Caco-2 (cell line): ENCODE measurements at regions of chr5 and their contacts with region 1.

Region 1: DNA sequence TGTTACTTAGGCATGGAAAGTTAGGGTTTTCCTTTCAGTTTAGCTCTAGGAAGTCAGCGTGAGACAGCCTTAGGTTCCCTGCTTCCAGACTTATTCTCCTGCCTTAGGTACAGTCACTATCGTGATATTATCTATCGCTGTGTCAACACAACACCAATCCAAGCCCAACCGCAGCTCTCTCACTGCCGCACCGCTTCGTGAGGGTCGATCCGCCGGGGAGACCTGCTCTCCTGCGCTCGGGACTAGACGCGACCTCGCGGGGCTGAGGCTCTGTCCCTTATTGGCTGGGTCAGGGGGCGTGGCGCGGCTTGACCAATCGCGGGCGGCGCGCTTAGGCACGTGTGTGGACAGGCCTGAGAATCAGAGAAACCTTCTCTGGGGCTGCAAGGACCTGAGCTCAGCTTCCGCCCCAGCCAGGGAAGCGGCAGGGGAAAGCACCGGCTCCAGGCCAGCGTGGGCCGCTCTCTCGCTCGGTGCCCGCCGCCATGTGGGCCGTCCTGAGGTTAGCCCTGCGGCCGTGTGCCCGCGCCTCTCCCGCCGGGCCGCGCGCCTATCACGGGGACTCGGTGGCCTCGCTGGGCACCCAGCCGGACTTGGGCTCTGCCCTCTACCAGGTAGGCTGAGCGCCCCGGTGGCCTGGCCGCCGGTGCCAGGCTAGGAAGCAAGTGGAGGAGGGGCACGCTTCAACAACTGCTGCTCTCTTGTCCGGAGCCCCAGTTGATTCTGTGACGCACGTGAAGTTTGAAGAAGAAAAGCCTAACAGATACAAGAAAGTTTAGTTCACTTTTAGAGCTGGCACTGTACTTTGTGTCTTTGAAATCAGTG is at the start of gene MCCC2:
- DNase-seq: peak; percentile 99
- H3K4me3 ChIP-seq: peak within 1 kb of the TSS; percentile 87
- H3K4me3 Mint-ChIP-seq: peak within 1 kb of the TSS; percentile 97
- H3K27ac Mint-ChIP-seq: peak within 1 kb of the TSS; percentile 99
- H3K4me1 ChIP-seq: peaks cover 8% of the 10 kb centered on the region
- H3K4me1 Mint-ChIP-seq: peaks cover 21% of the 10 kb centered on the region
- H3K27me3 ChIP-seq: no peaks in the 10 kb centered on the region
- H3K27me3 Mint-ChIP-seq: no peaks in the 10 kb centered on the region
- CTCF ChIP-seq: no peak
- total RNA-seq, gene MCCC2: 113 and 124 TPM in 2 replicates

Region 2: DNA sequence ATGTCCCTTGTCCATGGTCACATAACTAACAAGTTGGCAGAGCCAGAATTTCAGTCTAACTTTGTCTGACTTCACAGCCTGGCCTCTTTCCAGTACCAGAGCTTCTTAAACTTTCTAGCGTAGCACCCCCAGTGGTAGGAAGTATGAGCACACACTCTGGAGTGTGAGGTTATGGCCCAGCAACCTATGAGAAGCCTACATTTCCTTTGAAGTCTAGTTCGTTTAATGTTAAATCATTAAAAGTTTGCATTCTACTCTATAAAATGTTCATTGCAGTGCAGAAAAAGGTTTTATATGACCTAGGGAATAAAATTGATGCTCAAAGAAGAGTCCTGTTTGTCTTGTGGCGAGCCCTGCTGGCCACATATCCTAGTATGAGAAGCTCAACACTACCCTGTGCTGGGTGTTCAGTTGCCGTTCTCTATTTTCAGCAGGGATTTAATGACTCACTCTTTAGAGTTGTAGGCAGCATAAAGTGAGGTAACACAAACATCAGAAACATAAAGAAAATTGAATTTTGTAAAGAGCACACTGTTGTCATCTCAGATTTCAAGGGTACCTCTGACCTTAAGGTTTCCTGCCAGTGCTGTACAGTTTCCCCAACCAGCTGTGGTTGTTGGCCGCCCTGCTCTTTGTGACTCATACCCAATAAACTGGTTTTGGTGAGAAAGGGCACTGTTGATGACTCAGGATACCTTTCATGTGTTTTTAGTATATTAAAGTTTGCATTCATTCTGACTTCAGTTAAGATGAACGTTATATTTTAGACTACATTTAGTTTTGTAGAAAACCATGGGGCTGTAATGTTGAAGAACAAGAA is 14.3 kb after region 1 on chr5:
- CTCF ChIA-PET with region 1: interaction called, 15 read pairs
- POLR2A ChIA-PET with region 1: interaction called, 5 read pairs
- intact Hi-C with region 1: loop called (anchors 1 kb)
- DNase-seq: peak; percentile 54 to 62
- H3K4me3 ChIP-seq: no peak overlapping the region
- H3K4me3 Mint-ChIP-seq: no peak overlapping the region
- H3K27ac Mint-ChIP-seq: no peak overlapping the region
- H3K4me1 ChIP-seq: no peaks in the 10 kb centered on the region; the same call in 1 of the 2 replicates
- H3K4me1 Mint-ChIP-seq: no peaks in the 10 kb centered on the region
- H3K27me3 ChIP-seq: no peaks in the 10 kb centered on the region
- H3K27me3 Mint-ChIP-seq: no peaks in the 10 kb centered on the region
- CTCF ChIP-seq: peak; percentile 73 to 80

Region 3: DNA sequence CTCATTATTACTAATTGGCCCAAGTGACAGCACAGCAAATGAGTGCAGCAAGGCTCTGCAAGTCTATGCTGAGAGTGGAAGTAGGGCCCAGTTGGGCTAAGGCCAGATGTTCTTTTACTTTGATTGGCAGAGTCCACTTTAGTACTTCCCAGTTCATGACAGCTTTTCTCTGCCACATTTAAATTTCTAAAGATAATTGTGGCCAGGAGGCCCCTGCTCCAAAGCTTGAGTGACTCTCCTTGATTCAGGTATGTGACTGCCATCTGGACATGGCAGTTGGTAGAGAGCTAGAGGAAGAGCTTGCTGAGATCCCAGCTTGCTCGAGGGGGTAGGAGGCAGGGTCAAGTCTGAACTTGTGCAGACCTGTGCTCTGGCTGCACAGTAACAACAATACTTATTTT is 286.0 kb after region 1 on chr5:
- CTCF ChIA-PET with region 1: no interaction called
- POLR2A ChIA-PET with region 1: no interaction called
- intact Hi-C with region 1: no loop called
- DNase-seq: no peak
- H3K4me3 ChIP-seq: no peak overlapping the region
- H3K4me3 Mint-ChIP-seq: no peak overlapping the region
- H3K27ac Mint-ChIP-seq: no peak overlapping the region
- H3K4me1 ChIP-seq: no peaks in the 10 kb centered on the region
- H3K4me1 Mint-ChIP-seq: no peaks in the 10 kb centered on the region
- H3K27me3 ChIP-seq: no peaks in the 10 kb centered on the region
- H3K27me3 Mint-ChIP-seq: peaks cover 14% of the 10 kb centered on the region
- CTCF ChIP-seq: no peak